Activated T-helper 2 cell treated with anti-CD3 and anti-CD28 coated beads, Interferon-gamma antibody, Interleukin-2, Interleukin-4, amounts not matched to agents 10 μg/mL and 5 μg/mL and 100 μg/mL, durations not matched to agents 14 hours and 24 hours and 36 hours (primary cell): ENCODE measurements at regions of chr1 and their contacts with region 1.

Region 1: DNA sequence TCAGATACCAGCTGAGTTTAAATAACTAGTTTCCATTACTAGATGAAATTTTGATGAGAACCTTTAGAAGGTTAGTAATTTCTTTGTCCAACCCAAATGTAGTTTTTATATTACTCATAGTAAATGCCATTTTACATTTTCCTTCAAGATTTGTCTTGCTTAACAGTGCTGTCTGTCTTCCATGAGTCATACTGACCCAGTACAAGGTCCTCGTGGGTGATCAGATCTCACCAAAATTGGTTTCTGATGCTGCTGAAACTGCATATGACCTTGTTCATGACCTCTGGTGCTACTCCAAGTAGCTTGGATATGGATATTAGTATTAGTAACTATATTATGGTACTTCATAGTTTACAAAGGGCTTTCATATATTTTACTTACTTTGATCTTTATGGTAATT is 207.1 kb downstream of the RYR2 start:
- DNase-seq: no peak
- H3K4me3 Mint-ChIP-seq: no peak overlapping the region
- H3K27ac Mint-ChIP-seq: peak overlapping the region; percentile 54
- H3K4me1 Mint-ChIP-seq: peaks cover 2% of the 10 kb centered on the region
- H3K27me3 Mint-ChIP-seq: no peaks in the 10 kb centered on the region

Region 2: DNA sequence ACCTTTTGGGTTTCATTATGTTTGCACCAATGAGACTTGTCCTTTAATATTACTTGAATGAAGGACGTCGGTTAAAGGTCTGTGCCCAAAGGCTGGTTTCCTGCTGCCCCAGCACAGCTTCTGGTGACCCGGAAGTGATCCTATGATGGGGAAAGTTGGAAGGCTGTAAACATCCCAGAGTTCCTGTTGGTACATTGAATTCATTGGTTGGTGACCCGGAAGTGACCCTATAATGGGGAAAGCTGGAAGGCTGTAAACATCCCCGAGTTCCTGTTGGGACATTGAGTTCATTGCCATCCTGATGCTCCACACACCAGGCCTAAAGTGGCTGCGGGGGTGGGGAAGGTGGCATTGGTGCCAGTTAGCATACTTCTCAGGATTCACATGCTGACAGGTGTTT is 19.8 kb before region 1 on chr1:
- intact Hi-C with region 1: loop called (anchors 2 kb)
- DNase-seq: no peak
- H3K4me3 Mint-ChIP-seq: no peak overlapping the region
- H3K27ac Mint-ChIP-seq: no peak overlapping the region
- H3K4me1 Mint-ChIP-seq: peaks cover 11% of the 10 kb centered on the region
- H3K27me3 Mint-ChIP-seq: peaks cover 7% of the 10 kb centered on the region

Region 3: GRCh38 chr1:237303929-237304328 is 54.8 kb after region 1 on chr1:
- intact Hi-C with region 1: loop called (anchors 1 kb)
- DNase-seq: no peak
- H3K4me3 Mint-ChIP-seq: no peak overlapping the region
- H3K27ac Mint-ChIP-seq: peak overlapping the region; percentile 21
- H3K4me1 Mint-ChIP-seq: peaks cover 16% of the 10 kb centered on the region
- H3K27me3 Mint-ChIP-seq: no peaks in the 10 kb centered on the region

Region 4: DNA sequence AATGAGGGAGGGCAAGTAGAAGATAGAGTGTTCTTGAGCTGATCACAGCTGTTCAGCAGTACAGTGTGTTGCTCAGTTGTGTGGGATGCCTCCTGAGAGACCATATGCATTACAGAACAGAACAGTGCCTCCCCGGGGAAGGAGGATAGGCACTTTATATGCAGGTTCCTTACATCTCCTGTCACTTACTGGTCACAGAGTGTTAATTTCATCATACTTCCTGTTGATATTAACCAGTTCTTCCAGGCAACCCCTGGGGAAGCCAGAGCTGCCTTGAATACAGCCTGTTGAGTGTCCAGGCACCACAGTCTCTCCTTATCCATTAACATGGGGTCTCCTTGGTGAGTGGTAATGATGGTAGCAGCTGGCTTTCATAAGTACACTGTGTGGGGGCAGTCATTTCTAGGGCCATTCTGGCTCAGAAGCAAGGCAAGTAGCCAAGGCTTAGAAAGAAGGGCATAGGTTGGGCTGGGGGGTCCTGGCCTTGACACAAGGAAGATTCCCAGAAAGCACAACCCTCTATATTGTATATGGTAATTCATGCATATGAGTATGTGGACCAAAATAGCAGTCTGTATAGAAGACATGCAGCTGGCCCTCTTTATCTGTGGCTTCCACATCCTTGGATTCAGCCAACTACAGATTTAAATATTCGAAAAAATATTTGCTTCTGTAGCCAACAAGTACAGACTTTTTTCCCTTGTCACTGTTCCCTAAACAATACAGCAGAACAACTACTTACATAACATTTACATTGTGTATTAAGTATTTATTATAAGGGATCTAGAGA is 499.2 kb after region 1 on chr1:
- intact Hi-C with region 1: no loop called
- DNase-seq: no peak
- H3K4me3 Mint-ChIP-seq: no peak overlapping the region
- H3K27ac Mint-ChIP-seq: no peak overlapping the region
- H3K4me1 Mint-ChIP-seq: no peaks in the 10 kb centered on the region
- H3K27me3 Mint-ChIP-seq: no peaks in the 10 kb centered on the region